OCI-LY7 (cell line): ENCODE measurements at regions of chr20 and their contacts with region 1.

Region 1: GRCh38 chr20:18587665-18588573 is at the start of gene DTD1:
- DNase-seq: peak; percentile 87
- H3K4me3 ChIP-seq: peak within 1 kb of the TSS; percentile 81
- H3K27ac ChIP-seq: peak within 1 kb of the TSS; percentile 10
- H3K4me1 ChIP-seq: peaks cover 15% of the 10 kb centered on the region
- CTCF ChIP-seq: peak; percentile 76
- total RNA-seq, gene DTD1: 27.6 and 35.3 TPM in 2 replicates

Region 2: GRCh38 chr20:18331694-18332093 is 256.2 kb before region 1 on chr20:
- CTCF ChIA-PET with region 1: no interaction called
- POLR2A ChIA-PET with region 1: no interaction called
- intact Hi-C with region 1: no loop called
- DNase-seq: no peak
- H3K4me3 ChIP-seq: no peak overlapping the region
- H3K27ac ChIP-seq: no peak overlapping the region
- H3K4me1 ChIP-seq: no peaks in the 10 kb centered on the region
- CTCF ChIP-seq: no peak

Region 3: GRCh38 chr20:18566892-18567742 is 20.8 kb before region 1 on chr20 and contains the start of gene SMIM26:
- CTCF ChIA-PET with region 1: no interaction called
- POLR2A ChIA-PET with region 1: interaction called, 6 read pairs
- intact Hi-C with region 1: loop called (anchors 1 kb)
- DNase-seq: peak; percentile 97
- H3K4me3 ChIP-seq: peak within 1 kb of the TSS; percentile 83
- H3K27ac ChIP-seq: peak within 1 kb of the TSS; percentile 51
- H3K4me1 ChIP-seq: peaks cover 16% of the 10 kb centered on the region
- CTCF ChIP-seq: no peak
- total RNA-seq, gene SMIM26: 124 and 161 TPM in 2 replicates

Region 4: DNA sequence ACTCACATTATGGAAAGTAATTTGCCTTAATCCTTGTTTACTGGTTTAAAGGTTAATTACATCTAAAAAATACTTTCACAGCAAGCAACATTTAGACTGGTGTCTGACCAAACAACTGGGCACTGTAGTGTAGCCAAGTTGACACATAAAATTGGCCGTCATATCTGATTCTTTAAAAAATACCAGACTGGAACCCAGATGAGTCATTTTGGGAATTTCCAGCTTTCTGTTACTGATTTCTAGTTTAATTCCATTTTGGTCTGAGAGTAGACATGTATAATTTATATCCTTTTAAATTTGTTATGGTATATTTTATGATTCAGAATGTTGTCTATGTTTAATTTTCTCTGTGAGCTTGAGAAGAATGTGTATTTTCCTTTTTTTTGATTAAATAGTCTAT is 269.7 kb after region 1 on chr20:
- CTCF ChIA-PET with region 1: no interaction called
- POLR2A ChIA-PET with region 1: no interaction called
- intact Hi-C with region 1: no loop called
- DNase-seq: no peak
- H3K4me3 ChIP-seq: no peak overlapping the region
- H3K27ac ChIP-seq: no peak overlapping the region
- H3K4me1 ChIP-seq: no peaks in the 10 kb centered on the region
- CTCF ChIP-seq: no peak